OCI-LY7 (cell line): ENCODE measurements at regions of chr19 and their contacts with region 1.

Region 1: DNA sequence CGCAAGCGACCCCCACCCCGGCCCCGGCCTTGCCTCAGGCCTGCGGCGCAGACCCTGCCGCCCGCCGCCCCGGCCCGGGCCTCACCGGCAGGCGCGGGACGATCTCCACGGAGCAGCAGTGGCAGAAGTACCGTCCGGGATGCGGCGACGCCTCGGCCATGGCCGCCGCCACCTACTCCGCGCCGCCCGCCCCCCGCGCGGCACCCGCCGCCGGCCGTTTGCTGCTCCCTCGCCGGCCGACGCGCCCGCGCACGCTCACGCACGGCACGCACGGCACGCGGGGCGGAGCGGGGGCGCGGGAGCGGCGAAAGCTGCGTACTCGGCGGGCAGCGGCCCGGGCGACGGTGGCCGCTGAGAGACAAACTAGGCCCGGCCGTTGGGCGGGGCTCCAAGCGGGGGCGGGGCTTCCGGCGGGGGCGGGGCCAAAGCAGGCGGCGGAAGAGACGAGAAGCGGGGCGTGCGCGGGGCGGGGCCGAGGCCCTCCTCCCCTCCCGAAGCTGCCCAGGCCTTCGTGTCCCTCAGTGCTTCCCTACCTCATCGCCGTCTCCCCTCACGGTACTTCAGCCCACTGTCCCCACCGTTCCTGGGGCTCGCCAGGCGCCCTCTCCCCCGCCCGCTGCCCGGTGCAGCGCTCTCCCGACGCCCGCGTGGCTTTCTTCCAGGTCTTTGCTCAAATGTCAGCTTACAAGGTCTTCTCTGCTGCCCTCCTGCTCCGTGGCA is at the start of gene RNF126:
- DNase-seq: peak; percentile 93
- H3K4me3 ChIP-seq: peak within 1 kb of the TSS; percentile 100
- H3K27ac ChIP-seq: peak within 1 kb of the TSS; percentile 81
- H3K4me1 ChIP-seq: peaks cover 44% of the 10 kb centered on the region
- CTCF ChIP-seq: no peak
- total RNA-seq, gene RNF126: 85.8 and 98.6 TPM in 2 replicates

Region 2: DNA sequence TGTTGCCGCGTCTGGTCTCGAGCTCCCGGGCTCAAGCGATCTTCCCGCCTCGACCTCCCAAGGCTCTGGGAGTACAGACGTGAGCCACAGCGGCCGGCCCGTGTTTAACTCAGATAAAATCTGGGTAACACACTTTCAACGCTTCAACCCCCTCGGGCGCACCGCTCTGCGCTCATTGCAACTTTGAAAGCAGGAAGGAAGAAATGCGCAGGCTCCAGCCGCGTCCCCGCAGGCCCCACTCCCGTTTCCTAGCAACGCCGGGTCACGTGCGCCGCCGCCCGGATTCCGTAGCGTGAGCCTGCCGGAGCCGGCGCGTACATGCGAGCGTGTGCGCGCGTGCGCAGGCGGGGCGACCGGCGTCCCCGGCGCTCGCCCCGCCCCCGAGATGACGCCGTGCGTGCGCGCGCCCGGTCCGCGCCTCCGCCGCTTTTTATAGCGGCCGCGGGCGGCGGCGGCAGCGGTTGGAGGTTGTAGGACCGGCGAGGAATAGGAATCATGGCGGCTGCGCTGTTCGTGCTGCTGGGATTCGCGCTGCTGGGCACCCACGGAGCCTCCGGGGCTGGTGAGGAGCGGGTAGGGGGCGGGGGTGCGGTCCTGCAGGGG is 90.9 kb before region 1 on chr19 and contains the start of gene BSG:
- CTCF ChIA-PET with region 1: no interaction called
- POLR2A ChIA-PET with region 1: no interaction called
- intact Hi-C with region 1: loop called (anchors 5 kb)
- DNase-seq: peak; percentile 99
- H3K4me3 ChIP-seq: peak within 1 kb of the TSS; percentile 95
- H3K27ac ChIP-seq: peak within 1 kb of the TSS; percentile 88
- H3K4me1 ChIP-seq: peaks cover 32% of the 10 kb centered on the region
- CTCF ChIP-seq: no peak
- total RNA-seq, gene BSG: 158 and 180 TPM in 2 replicates

Region 3: GRCh38 chr19:604355-604754 is 58.8 kb before region 1 on chr19:
- CTCF ChIA-PET with region 1: no interaction called
- POLR2A ChIA-PET with region 1: no interaction called
- intact Hi-C with region 1: loop called (anchors 2 kb)
- DNase-seq: peak; percentile 89
- H3K4me3 ChIP-seq: no peak overlapping the region
- H3K27ac ChIP-seq: no peak overlapping the region
- H3K4me1 ChIP-seq: peaks cover 5% of the 10 kb centered on the region
- CTCF ChIP-seq: no peak

Region 4: DNA sequence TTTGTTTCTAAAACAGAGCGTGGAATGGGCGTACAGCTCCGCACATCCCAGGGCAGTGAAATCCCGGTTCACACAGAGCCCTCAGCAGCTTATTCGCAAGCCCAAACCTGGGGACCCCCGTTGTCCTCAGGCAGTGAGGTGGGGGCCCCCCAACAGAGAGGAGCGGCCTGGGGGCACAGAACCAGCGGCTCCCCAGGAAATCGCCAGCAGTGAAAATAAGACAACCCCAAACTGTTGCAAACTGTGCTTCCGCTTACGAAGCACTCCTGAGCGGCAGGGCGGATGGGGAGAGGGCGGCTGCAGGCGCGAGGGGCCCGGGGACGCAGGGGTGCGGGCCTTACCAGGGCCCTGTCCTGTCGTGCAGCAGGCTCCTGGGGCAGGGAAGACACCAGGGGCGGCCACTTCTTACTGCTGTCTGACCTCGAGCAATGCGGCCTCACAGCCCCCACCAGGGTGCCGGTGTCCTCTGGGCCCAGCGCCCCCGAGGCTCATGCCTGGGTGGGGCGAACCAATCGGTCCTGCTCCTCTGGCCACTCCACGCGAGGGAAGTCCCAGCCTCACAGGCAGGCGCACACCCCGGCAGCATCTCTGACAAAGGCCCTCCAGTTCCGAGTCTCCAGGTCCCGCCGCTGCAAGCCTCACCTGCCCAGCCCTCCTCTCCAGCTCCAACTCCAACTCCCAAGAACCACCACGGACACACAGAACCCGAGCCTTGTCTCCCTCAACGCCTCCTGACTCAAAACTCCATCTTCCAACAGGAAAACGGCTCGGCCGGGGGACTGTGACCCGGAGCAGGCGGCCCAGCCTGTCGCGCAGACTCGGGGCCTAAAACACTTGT is 17.3 kb before region 1 on chr19:
- CTCF ChIA-PET with region 1: no interaction called
- POLR2A ChIA-PET with region 1: no interaction called
- intact Hi-C with region 1: no loop called
- DNase-seq: no peak
- H3K4me3 ChIP-seq: no peak overlapping the region
- H3K27ac ChIP-seq: no peak overlapping the region
- H3K4me1 ChIP-seq: peaks cover 18% of the 10 kb centered on the region
- CTCF ChIP-seq: no peak

Region 5: DNA sequence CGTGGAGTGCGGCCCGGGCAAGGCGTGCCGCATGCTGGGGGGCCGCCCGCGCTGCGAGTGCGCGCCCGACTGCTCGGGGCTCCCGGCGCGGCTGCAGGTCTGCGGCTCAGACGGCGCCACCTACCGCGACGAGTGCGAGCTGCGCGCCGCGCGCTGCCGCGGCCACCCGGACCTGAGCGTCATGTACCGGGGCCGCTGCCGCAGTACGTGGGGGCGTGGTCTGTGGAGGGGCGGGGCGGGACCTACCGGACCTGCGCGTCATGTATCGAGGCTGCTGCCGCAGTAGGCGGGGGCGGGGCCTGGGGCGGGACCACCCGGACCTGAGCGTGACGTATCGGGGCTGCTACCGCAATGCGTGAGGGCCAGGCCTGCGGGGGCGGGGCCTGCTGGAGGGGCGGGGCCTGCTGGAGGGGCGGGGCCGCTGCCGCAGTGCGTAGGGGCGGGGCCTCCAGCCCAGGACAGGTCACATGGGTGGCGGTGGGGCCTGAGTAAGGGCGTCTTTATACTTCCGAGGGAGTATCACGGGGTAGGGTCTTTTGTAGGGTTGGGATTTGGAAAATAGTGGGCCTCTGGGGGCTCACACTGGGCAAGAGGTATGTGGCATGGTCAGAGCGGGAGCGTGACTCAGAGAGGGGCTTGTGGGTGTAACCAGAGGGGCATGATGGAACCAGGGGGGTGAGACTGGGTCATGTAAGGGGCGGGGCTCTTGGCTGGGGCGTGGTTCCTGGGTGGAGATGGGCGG is 17.3 kb after region 1 on chr19:
- CTCF ChIA-PET with region 1: no interaction called
- POLR2A ChIA-PET with region 1: interaction called, 3 read pairs
- intact Hi-C with region 1: loop called (anchors 2 kb)
- DNase-seq: peak; percentile 98
- H3K4me3 ChIP-seq: peak overlapping the region; percentile 98
- H3K27ac ChIP-seq: peak overlapping the region; percentile 65
- H3K4me1 ChIP-seq: peaks cover 10% of the 10 kb centered on the region
- CTCF ChIP-seq: peak; percentile 68

Region 6: GRCh38 chr19:732148-733069 is 69.3 kb after region 1 on chr19:
- CTCF ChIA-PET with region 1: no interaction called
- POLR2A ChIA-PET with region 1: interaction called, 5 read pairs
- intact Hi-C with region 1: loop called (anchors 1 kb)
- DNase-seq: no peak
- H3K4me3 ChIP-seq: no peak overlapping the region
- H3K27ac ChIP-seq: no peak overlapping the region
- H3K4me1 ChIP-seq: peaks cover 19% of the 10 kb centered on the region
- CTCF ChIP-seq: no peak

Region 7: DNA sequence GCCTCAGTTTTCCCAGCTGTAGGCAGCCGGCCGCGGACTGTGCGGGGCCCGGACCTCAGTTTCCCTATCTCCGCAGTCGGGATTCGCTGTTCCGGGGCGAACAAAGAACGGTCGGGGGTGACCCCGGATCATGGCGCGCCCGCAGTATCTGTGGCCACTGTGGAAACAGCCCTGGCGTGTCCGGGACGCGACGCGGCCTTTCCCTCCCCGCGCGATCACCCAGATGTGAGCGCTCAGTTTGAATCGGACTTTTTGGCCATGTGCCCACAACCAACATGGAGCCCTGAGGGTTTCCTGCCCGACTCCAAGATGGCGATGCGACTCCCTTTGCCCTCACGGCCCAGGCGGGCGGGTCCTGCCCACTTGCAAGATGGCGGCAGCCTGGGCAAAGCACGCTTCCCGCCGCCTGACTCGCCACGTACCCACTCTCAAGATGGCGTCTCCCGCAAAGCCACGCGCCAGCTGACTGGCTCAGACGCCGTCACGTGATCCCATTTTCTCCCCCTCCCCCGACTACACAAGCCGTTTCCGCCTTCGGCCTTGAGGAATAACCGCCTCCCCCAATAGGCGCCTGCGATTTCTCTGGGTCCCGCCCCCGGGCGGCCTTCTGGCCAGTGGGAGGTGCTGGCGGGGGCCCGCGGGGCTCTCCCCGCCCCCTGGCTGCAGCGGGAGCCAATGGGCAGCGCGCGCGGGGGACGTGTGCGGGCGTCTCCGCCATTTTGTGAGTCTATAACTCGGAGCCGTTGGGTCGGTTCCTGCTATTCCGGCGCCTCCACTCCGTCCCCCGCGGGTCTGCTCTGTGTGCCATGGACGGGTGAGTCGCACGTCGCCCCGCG is 133.8 kb after region 1 on chr19 and contains the start of gene PTBP1:
- CTCF ChIA-PET with region 1: no interaction called
- POLR2A ChIA-PET with region 1: no interaction called
- intact Hi-C with region 1: loop called (anchors 2 kb)
- DNase-seq: peak; percentile 100
- H3K4me3 ChIP-seq: peak within 1 kb of the TSS; percentile 98
- H3K27ac ChIP-seq: peak within 1 kb of the TSS; percentile 79
- H3K4me1 ChIP-seq: peaks cover 21% of the 10 kb centered on the region
- CTCF ChIP-seq: no peak
- total RNA-seq, gene PTBP1: 284 and 315 TPM in 2 replicates